Breast epithelium (tissue), 4 donors: ENCODE measurements at regions of chr16 and their contacts with region 1.

Region 1: DNA sequence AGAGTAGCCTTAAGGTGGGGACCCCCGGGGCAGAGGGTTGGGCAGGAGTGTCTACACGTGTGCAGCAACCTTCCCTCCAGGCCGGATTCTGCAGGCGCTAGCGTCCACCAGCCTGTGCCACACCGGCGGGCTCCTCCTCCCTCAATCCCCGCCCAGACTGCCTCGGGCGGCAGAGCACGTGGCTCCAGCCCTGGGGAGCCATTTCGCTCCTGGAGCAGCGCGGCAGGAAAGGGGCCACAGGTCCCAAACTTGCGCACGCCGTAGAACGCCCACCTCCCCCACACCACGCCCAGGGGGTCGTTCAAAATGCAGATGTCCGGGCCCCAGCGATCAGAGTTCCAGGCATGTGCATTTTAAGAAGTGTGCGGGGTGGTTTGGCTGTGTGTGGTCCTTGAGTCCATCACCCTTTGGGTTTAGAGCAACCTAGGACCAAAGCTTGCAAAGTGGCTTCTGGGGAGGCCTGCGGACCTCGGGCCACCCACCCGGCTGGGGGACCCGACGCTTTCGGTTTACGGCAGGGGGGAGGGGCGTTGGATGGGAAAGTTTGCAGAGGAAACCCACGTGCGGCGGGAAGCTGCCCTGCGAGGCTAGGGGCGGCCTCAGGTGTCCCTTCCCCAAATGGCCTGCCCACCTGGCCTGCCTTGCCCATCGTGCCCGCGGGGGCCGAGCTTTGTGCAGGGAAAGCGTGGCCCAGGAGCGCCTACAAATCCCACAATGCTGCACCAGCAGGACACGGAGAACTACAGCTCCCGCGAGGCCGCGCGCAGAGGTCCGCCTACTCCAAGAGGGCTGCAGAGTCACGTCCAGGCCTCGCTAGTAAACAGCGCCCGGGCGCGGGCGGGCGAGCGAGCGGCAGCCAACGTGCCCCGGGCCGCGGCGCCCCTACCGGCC is 1.4 kb downstream of the TFAP4 start:
- DNase-seq: peak; percentile 85 to 90
- H3K4me3 ChIP-seq: peak overlapping the region; percentile 74 to 99 (median 87)
- H3K27ac ChIP-seq: peak overlapping the region; percentile 88 to 93
- H3K4me1 ChIP-seq: no peaks in the 10 kb centered on the region
- H3K27me3 ChIP-seq: no peaks in the 10 kb centered on the region
- CTCF ChIP-seq: peak in 1 of 3 donors; percentile 9
- POLR2A ChIP-seq: peak; percentile 13

Region 2: DNA sequence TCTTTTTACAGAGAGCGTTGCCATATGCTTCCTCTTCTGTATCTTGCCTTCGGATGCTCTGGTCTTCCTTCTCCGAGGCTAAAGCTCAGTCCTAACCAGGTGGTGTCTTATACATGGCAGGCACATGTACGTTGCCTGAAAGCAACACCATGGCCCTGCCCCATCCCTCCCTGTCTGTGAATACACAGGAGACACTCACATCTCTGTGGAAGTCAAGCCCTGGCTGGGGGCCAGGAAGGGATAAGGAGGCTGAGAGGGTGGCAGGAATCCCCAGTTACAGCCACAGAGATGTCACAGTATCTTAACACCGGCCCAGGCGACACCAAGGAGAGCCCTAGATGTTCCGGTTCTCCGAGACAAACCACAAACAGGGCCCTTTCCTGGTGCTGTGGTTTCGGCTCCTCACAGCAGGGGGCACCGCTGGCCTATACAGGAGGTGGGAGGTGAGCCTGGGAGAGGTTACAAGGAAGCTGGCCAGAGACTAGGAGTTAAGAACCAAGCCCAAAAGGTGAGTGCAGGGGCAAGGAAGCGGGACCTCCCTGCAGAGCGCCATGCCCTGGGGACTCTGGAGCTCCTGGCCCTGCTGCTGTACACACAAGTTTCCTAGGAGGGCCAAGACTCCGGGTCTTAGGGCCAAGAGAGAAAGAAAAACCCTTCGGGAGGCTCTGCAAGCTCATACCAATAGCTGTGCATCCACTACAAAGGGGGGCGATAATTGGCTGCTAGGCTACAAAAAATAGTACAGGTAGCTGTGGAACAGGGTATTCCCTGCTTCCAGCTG is 71.2 kb before region 1 on chr16:
- intact Hi-C with region 1: no loop called
- DNase-seq: peak; percentile 73 to 74
- H3K4me3 ChIP-seq: no peak overlapping the region
- H3K27ac ChIP-seq: peak overlapping the region in 1 of 2 donors; percentile 45
- H3K4me1 ChIP-seq: no peaks in the 10 kb centered on the region
- H3K27me3 ChIP-seq: no peaks in the 10 kb centered on the region
- CTCF ChIP-seq: peak; percentile 24 to 74 (median 67)
- POLR2A ChIP-seq: no peak

Region 3: GRCh38 chr16:4288148-4288921 is 16.9 kb after region 1 on chr16:
- intact Hi-C with region 1: loop called (anchors 1 kb)
- DNase-seq: peak; percentile 57 to 74
- H3K4me3 ChIP-seq: peak overlapping the region in 2 of 3 donors; percentile 9 to 42
- H3K27ac ChIP-seq: no peak overlapping the region
- H3K4me1 ChIP-seq: peaks cover 0 to 6% of the 10 kb centered on the region in 2 donors
- H3K27me3 ChIP-seq: no peaks in the 10 kb centered on the region
- CTCF ChIP-seq: peak; percentile 70 to 92 (median 88)
- POLR2A ChIP-seq: no peak

Region 4: DNA sequence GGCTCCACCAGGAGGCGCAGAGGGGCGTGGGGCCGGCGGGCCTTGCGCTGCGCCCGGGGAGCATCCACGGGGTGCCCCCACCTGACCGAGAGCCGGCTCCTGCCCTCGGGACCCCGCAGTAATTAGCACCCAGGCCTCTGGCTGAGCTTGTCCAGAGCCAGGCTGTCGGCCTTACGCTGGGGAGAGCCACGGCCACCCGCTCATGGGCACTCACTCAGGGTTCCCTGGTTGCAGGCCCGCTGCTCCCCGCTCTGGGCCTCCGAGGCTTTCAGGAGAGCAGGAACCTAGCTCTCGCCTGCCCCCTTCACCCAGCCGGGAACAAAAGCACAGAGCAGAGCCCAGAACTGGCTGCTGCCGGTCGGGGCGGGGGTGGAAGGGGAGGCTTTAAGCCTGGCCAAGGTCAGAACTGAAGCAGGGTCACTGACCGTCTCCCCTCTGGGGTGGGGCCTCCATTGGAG is 56.7 kb after region 1 on chr16:
- intact Hi-C with region 1: loop called (anchors 10 kb)
- DNase-seq: peak; percentile 76 to 84
- H3K4me3 ChIP-seq: peak overlapping the region; percentile 45 to 70 (median 63)
- H3K27ac ChIP-seq: peak overlapping the region; percentile 88 to 96
- H3K4me1 ChIP-seq: peaks cover 18 to 36% of the 10 kb centered on the region in 2 donors
- H3K27me3 ChIP-seq: no peaks in the 10 kb centered on the region
- CTCF ChIP-seq: peak; percentile 39 to 69 (median 60)
- POLR2A ChIP-seq: no peak